ENCODE measurements at regions of chr9 and their contacts with region 1.

Region 1: GRCh38 chr9:112218908-112219307 is 43.8 kb upstream of the SUSD1 start:
- H3K4me3 Mint-ChIP-seq: no peak overlapping the region
- H3K27ac Mint-ChIP-seq: no peak overlapping the region
- H3K4me1 Mint-ChIP-seq: no peaks in the 10 kb centered on the region
- H3K27me3 Mint-ChIP-seq: no peaks in the 10 kb centered on the region

Region 2: DNA sequence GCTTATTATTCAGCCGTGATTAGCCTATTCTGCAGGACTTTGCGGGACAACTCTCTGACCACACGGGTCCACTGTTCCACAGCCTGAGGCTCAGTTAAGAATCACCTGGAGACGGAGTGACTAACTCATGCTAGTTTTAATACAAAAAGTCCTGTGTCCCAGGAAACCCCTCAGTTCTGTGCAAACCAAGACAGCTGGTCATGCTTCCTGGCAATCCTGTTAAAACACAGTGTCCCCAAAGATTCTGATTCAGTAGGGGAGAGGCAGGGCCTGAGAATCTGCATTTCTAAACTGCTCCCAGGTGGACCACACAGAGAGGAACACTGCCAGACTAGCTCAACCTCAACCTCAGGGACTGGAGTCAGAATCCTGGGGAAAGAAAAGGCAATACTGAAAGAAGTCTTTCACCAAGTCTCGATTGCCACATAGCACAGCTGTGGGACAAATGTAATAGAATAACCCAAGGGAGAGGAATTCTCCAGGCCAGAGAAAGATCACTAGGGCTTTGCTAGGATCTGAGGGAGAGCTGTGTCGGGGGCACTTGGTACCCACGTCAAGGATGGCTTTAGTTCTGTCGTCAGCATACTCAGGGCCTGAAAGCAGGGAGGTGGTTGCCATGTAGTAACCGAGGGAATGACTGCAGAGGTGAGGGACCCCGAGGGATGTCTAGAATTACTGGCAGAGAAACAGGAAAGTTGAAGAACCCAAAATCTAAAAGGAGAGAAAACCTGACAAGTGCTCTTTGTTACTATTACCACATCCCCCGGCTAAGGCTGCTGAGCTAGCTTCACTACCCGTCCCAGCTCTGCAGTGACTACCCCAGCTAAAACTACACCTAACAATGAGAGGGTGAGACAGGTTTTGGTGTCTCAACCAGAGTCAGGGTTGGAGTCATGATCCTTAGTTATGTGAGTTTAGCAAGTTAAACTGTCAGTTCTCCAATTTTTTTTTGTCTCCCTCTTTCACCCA is 52.5 kb before region 1 on chr9:
- intact Hi-C with region 1: loop called (anchors 10 kb)
- H3K4me3 Mint-ChIP-seq: no peak overlapping the region
- H3K27ac Mint-ChIP-seq: peak overlapping the region; percentile 20
- H3K4me1 Mint-ChIP-seq: peaks cover 57% of the 10 kb centered on the region
- H3K27me3 Mint-ChIP-seq: no peaks in the 10 kb centered on the region

Region 3: GRCh38 chr9:112203536-112203935 is 15.4 kb before region 1 on chr9:
- intact Hi-C with region 1: no loop called
- H3K4me3 Mint-ChIP-seq: no peak overlapping the region
- H3K27ac Mint-ChIP-seq: no peak overlapping the region
- H3K4me1 Mint-ChIP-seq: no peaks in the 10 kb centered on the region
- H3K27me3 Mint-ChIP-seq: no peaks in the 10 kb centered on the region

Measured in dendritic cell treated with granulocyte-macrophage colony-stimulating factor and Interleukin-4, amounts not matched to agents 40 ng/mL and 50 ng/mL, for 4 days (primary cell).